Lower leg skin (tissue), 4 donors: ENCODE measurements at regions of chr6 and their contacts with region 1.

Region 1: DNA sequence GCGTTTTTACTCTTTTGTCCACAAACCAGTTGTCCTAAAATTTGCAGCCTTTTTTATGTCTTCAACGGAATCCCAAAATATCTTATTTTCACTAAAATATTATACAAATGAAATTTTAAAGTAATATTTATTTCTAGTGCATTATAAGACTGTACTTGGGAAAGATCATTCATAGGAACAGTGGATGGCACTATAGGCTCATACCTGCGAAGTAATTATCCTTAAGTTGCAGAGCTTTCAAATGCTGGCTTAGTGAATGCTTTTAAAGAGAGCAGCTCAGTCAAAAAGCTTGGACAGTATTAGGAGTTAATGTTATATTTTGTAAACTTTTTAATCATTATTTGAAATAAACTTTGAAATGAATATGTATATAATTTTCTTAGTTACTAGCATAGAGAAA is 254.9 kb downstream of the CDKAL1 start:
- DNase-seq: no peak
- H3K4me3 ChIP-seq: no peak overlapping the region
- CTCF ChIP-seq: no peak
- POLR2A ChIP-seq: no peak

Region 2: GRCh38 chr6:20811109-20811746 is 22.1 kb after region 1 on chr6:
- intact Hi-C with region 1: no loop called
- DNase-seq: no peak
- H3K4me3 ChIP-seq: no peak overlapping the region
- CTCF ChIP-seq: no peak
- POLR2A ChIP-seq: no peak

Region 3: GRCh38 chr6:22471132-22471690 is 1682.0 kb after region 1 on chr6:
- intact Hi-C with region 1: loop called (anchors 5 kb)
- DNase-seq: peak; percentile 54 to 87
- H3K4me3 ChIP-seq: no peak overlapping the region
- CTCF ChIP-seq: no peak
- POLR2A ChIP-seq: no peak